ENCODE measurements at regions of chr11 and their contacts with region 1.

Region 1: DNA sequence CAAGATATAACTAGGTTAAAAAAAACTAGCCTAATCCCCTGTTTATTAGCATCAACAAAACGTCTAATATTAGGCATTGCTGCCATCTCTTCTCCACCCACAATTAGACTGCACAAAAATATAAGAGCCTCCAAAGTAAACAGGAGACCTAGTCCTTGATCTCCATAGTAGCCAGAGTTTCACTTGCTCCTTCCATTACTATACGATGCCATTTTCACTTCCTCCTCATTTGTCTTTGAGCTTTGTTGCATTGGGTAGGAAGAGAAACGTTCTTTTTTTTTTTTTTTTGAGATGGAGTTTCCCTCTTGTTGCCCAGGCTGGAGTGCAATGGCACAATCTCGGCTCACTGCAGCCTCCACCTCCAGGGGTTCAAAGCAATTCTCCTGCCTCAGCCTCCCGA is 42.3 kb upstream of the RDX start:
- DNase-seq: no peak
- H3K4me3 Mint-ChIP-seq: no peak overlapping the region
- H3K27ac Mint-ChIP-seq: peak overlapping the region; percentile 74
- H3K4me1 Mint-ChIP-seq: peaks cover 19% of the 10 kb centered on the region
- H3K27me3 Mint-ChIP-seq: no peaks in the 10 kb centered on the region

Region 2: GRCh38 chr11:110219011-110219785 is 119.5 kb before region 1 on chr11:
- CTCF ChIA-PET with region 1: no interaction called
- POLR2A ChIA-PET with region 1: no interaction called
- DNase-seq: no peak
- H3K4me3 Mint-ChIP-seq: no peak overlapping the region
- H3K27ac Mint-ChIP-seq: peak overlapping the region; percentile 7
- H3K4me1 Mint-ChIP-seq: no peaks in the 10 kb centered on the region
- H3K27me3 Mint-ChIP-seq: no peaks in the 10 kb centered on the region

Region 3: DNA sequence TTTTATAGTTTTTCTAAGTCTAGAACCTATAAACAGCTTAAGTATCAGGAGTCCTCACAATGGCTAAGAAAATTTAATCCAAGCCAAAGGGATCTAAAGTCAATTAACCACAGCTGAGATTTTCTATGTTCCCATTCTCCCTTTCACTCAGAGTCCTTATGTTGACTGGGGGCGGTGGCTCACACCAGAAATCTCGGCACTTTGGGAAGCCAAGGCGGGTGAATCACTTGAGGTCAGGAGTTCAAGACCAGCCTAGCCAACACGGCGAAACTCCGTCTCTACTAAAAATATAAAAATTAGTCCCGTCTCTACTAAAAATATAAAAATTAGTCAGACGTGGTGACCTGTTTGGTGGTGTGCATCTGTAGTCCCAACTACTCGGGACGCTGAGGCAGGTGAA is 49.2 kb before region 1 on chr11:
- CTCF ChIA-PET with region 1: no interaction called
- POLR2A ChIA-PET with region 1: no interaction called
- DNase-seq: no peak
- H3K4me3 Mint-ChIP-seq: no peak overlapping the region
- H3K27ac Mint-ChIP-seq: no peak overlapping the region
- H3K4me1 Mint-ChIP-seq: peaks cover 60% of the 10 kb centered on the region
- H3K27me3 Mint-ChIP-seq: no peaks in the 10 kb centered on the region

Region 4: DNA sequence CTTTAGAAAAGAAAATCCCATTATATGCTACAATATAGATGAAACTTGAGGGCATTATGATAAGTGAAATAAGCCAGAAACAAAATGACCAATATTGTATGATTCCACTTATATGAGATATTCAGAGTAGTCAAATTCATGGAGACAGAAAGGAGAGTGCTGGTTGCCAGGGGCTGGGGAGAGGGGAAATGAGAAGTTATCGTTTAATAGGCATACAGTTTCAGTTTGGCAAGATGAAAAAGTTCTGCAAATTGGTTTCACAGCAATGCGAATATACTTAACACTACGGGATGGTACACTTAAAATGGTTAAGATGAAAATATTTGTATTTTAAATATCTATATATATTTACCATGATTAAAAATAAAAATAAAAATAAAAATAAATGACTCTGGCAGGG is 11.2 kb before region 1 on chr11:
- CTCF ChIA-PET with region 1: interaction called, 7 read pairs
- POLR2A ChIA-PET with region 1: interaction called, 10 read pairs
- DNase-seq: no peak
- H3K4me3 Mint-ChIP-seq: peak overlapping the region; percentile 76
- H3K27ac Mint-ChIP-seq: no peak overlapping the region
- H3K4me1 Mint-ChIP-seq: peaks cover 22% of the 10 kb centered on the region
- H3K27me3 Mint-ChIP-seq: no peaks in the 10 kb centered on the region

Region 5: GRCh38 chr11:110366291-110366690 is 27.6 kb after region 1 on chr11:
- CTCF ChIA-PET with region 1: no interaction called
- POLR2A ChIA-PET with region 1: no interaction called
- DNase-seq: no peak
- H3K4me3 Mint-ChIP-seq: no peak overlapping the region
- H3K27ac Mint-ChIP-seq: no peak overlapping the region
- H3K4me1 Mint-ChIP-seq: peaks cover 10% of the 10 kb centered on the region
- H3K27me3 Mint-ChIP-seq: no peaks in the 10 kb centered on the region